Ascending aorta (tissue), 2 donors: ENCODE measurements at regions of chr22 and their contacts with region 1.

Region 1: GRCh38 chr22:22959147-22959827 is 71.7 kb downstream of the IGLL5 start:
- DNase-seq: peak in 1 of 2 donors; percentile 76
- H3K4me3 ChIP-seq: no peak overlapping the region
- H3K27ac ChIP-seq: no peak overlapping the region
- H3K4me1 ChIP-seq: no peaks in the 10 kb centered on the region
- H3K27me3 ChIP-seq: no peaks in the 10 kb centered on the region
- CTCF ChIP-seq: peak; percentile 67 to 72 (median 71)

Region 2: DNA sequence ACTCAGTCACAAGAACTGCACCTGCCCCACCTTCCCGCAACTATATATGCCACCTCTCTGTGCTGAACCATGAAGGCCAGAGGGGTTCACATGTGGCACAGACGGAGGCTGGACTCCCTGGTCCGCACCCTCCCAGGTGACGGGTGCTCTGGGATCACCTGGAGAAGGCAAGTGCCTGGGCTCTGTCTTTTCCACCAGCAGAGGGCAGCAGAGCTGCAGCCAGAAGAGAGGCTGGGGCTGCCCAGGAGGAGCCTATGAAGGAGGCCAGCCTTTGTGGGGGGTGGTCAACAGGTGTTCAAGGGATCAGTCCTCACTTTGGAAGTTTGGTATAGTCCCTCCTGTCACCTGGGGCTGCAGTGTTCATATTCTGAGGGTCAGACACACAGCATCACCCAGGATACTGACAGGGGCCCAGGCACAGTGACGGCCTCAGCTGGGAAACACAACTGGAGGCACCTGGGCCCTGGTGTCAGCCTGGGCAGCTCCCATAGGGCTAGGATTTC is 110.9 kb before region 1 on chr22:
- intact Hi-C with region 1: loop called (anchors 5 kb)
- DNase-seq: no peak
- H3K4me3 ChIP-seq: no peak overlapping the region
- H3K27ac ChIP-seq: no peak overlapping the region
- H3K4me1 ChIP-seq: no peaks in the 10 kb centered on the region
- H3K27me3 ChIP-seq: no peaks in the 10 kb centered on the region
- CTCF ChIP-seq: peak; percentile 58 to 79 (median 65)

Region 3: DNA sequence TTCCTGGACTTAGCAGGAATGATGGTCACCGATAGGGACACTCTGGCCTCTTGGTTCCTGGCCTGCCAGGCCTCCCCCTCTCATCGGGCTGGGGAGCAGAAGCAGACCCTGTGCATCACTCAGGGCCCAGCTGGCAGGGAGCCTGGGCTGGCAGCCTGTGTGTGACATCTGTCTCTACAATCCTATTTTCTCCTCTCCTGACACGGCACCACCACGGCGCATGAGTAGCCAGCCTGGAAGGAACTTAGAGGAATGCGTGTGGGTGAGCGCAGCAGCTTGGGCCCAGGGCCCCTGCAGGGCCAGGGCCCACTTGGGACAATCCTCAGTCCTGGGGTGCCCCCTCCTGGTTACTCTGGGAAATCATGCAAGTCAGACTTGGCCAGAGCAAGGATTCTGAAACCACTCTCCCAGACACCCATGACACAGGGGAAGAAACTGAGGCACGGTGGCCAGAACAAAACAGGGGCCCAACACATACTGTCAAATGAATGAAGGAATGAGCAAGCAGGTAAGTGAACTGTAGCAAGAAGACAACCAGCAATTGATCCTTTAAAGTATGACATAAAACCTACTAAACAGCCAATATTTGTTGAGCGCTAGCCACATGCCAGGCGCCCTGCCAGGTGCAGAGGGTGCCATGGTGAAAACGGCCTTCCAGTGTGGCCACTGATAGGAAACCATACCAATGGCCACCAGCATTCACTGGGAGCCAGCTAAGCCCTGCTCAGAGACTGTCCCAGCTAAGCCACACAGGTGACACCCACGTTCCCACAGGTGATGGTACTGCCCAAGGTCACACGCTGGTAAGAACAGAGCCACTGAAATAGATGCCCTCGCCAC is 169.2 kb after region 1 on chr22:
- intact Hi-C with region 1: loop called (anchors 1 kb)
- DNase-seq: peak in 1 of 2 donors; percentile 81
- H3K4me3 ChIP-seq: no peak overlapping the region
- H3K27ac ChIP-seq: no peak overlapping the region
- H3K4me1 ChIP-seq: no peaks in the 10 kb centered on the region
- H3K27me3 ChIP-seq: no peaks in the 10 kb centered on the region
- CTCF ChIP-seq: peak; percentile 66 to 84 (median 81)

Region 4: DNA sequence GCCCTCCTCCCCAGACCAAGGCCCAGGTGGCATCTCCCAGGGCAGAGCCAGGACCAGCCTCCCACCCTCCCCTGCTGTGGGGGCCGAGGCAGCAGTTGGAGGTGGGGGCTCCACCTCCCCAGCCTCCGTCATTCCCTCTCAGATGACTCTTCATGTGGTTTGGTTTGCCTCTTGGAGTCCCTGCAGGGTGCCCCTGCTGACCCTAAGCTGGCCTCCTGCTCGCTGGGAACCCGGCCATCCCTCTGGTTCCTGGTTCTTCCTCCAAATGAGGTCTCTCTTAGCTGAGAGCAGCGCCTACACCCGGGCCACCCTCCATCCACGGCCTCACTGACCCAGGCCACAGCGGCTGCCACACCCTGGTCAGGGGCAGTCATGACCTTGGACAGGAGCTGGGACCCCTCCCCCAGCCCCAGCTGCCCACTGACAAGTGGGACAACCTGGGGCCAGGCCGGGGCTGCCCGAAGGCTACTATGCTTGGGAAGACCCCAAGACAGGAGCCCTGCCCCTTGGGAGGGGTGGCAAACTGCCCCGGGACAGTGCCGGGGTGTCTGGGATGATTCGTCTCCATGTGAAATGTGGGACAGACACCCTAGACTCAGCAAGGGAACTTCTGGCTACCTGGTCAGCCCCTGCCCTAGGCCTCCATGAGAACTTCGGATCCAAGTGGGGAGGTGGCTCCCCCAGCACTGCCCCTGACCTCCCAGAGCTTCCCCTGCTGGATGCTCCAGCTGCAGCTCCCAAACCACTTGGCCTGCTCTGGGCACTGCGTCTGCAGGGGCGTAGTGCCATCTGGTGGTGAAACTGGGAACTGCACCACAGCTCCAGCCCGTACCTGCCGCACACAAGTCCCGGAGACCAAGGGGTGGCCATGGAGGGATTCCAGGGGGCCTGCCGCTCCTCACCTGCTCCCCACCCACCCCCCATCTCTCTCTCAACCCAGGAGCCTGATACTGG is 426.3 kb after region 1 on chr22:
- intact Hi-C with region 1: loop called (anchors 5 kb)
- DNase-seq: peak in 1 of 2 donors; percentile 84
- H3K4me3 ChIP-seq: no peak overlapping the region
- H3K27ac ChIP-seq: no peak overlapping the region
- H3K4me1 ChIP-seq: peaks cover 0 to 3% of the 10 kb centered on the region in 2 donors
- H3K27me3 ChIP-seq: no peaks in the 10 kb centered on the region
- CTCF ChIP-seq: peak; percentile 96 to 99 (median 97)